Heart right ventricle (tissue), 16 donors: ENCODE measurements at regions of chr5 and their contacts with region 1.

Region 1: DNA sequence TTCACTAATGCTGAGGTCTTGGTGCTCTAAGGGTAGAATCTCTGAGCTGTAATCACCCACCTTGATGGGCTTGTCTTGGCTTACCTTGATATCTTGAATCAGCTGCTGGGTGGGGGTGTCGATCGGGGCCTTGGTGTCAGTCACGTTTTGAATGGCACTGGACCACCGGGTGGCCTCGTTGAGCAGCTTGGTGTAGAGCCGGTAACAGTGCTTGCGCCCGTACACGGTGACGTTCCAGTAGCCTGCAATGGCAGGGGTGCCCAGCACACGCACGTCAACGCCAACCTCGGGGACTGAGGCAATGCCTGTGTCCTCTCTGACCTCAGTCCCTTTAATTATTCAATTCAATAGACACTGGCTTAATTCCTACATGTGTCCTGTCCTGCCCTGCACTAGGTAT is 63.1 kb upstream of the RETREG1 start:
- DNase-seq: no peak
- ATAC-seq: no peak
- H3K4me3 ChIP-seq: no peak overlapping the region
- H3K27ac ChIP-seq: no peak overlapping the region
- H3K4me1 ChIP-seq: no peaks in the 10 kb centered on the region
- H3K27me3 ChIP-seq: no peaks in the 10 kb centered on the region
- CTCF ChIP-seq: no peak

Region 2: DNA sequence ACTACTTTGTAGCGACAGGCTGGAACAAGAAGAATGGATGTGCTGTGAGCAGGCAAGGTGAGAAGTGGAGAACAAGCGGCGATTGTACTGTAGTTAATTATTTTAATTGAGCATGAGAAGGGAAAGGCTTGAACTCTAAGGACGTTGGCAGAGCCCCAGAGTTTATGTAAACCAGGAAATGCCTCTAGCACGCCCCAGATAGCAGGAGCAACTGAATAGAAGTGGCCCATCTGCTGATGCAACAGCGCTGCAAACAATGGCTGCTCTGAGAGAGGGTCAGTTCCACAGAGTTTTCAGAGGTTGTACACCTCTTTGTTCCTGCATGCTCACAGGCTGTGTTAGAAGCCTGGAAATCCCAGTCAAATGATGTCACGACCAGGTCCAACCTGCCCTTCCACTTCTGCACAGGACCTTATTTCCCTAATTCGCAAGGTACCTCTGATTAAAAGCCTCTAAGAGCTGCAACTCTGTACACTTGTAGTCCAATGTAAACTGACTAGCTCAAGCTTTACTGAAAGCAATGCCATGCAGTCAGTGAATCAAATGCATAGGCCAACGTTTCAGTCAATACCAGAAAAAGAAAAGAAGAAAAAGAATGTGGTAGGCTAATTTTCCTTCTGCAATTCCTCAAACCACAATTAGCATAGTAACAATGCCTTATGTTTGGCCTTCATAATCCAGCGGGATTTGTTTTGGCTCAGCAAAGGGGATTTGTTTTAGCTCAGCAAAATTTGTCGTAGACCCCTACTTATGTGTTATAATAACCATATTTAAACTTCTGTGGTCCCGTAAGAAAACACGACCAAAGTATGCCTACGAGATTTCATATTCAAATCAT is 56.5 kb after region 1 on chr5:
- intact Hi-C with region 1: loop called in 1 of 10 experiments (anchors 5 kb)
- DNase-seq: peak in 1 of 2 donors; percentile 23
- ATAC-seq: peak in 6 of 8 donors; percentile 51 to 75 (median 67)
- H3K4me3 ChIP-seq: no peak overlapping the region
- H3K27ac ChIP-seq: no peak overlapping the region
- H3K4me1 ChIP-seq: peaks cover 0 to 33% (median 19%) of the 10 kb centered on the region in 9 donors
- H3K27me3 ChIP-seq: peaks cover 0 to 13% (median 0%) of the 10 kb centered on the region in 7 donors
- CTCF ChIP-seq: no peak

Region 3: DNA sequence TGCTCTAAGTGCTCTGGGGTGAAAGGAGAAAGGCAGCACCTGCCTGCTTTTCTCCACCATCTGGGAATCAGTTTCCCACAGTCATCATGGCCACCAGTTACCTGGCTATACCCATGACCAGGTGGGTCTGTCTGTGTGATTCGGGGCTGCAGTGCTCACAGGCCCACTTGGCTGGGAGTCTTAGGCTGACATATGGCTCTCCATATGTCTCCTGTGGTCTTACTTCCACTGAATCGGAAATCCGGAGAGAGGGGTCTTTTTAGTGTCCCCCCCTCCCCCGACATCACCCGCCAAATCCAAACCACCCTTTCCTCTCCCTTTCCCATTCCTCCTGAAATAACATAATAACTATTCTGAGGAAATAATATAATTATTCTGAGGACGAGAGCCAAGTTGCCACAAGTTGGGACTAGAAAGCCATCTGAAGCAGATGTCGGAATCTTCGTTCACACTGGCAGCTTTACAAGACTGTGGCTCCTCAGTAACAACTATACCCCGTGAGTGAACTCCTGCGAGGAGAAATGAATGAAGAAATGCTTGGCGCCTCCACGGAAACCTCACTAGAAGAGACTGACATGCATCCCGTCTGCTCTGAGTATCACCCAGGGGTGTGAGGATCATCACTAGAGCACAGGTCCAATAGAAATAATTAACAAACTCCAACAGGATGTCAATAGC is 112.9 kb after region 1 on chr5:
- intact Hi-C with region 1: no loop called
- DNase-seq: no peak
- ATAC-seq: no peak
- H3K4me3 ChIP-seq: no peak overlapping the region
- H3K27ac ChIP-seq: no peak overlapping the region
- H3K4me1 ChIP-seq: peaks cover 0 to 9% (median 0%) of the 10 kb centered on the region in 9 donors
- H3K27me3 ChIP-seq: no peaks in the 10 kb centered on the region
- CTCF ChIP-seq: no peak

Region 4: GRCh38 chr5:17081142-17081541 is 401.3 kb after region 1 on chr5:
- intact Hi-C with region 1: no loop called
- DNase-seq: no peak
- ATAC-seq: no peak
- H3K4me3 ChIP-seq: no peak overlapping the region
- H3K27ac ChIP-seq: no peak overlapping the region
- H3K4me1 ChIP-seq: peaks cover 0 to 33% (median 11%) of the 10 kb centered on the region in 9 donors
- H3K27me3 ChIP-seq: no peaks in the 10 kb centered on the region
- CTCF ChIP-seq: no peak

Region 5: GRCh38 chr5:17204133-17204489 is 524.2 kb after region 1 on chr5:
- intact Hi-C with region 1: loop called in 2 of 10 experiments (anchors 10 kb)
- DNase-seq: no peak
- ATAC-seq: no peak
- H3K4me3 ChIP-seq: no peak overlapping the region
- H3K27ac ChIP-seq: no peak overlapping the region
- H3K4me1 ChIP-seq: no peaks in the 10 kb centered on the region
- H3K27me3 ChIP-seq: peaks cover 0 to 79% (median 30%) of the 10 kb centered on the region in 7 donors
- CTCF ChIP-seq: no peak